PC-3 (cell line): ENCODE measurements at regions of chr2 and their contacts with region 1.

Region 1: DNA sequence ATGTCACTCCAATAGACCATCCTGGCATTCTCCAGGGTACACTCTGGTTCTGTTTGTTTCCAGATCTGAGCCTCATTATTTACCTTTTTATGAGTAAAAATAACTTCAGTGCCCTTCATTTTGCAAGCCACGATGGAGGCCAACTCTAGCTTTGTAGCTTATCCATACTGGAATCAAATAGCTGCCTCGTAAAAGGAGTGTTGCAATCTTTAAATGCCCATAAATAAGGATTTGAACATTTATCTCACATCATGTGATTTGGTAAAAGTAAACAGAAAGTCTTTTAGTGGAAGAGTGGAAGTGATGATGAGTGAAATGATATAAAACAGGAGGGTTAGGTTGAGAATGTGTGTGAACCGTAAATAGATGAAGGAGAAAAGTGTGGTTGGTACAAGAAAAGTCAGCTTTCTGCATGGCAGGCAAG is 349.0 kb downstream of the OSR1 start:
- DNase-seq: peak; percentile 92
- ATAC-seq: peak; percentile 89
- H3K4me3 ChIP-seq: no peak overlapping the region
- H3K27ac ChIP-seq: peak overlapping the region; percentile 57
- H3K4me1 ChIP-seq: peaks cover 17% of the 10 kb centered on the region
- H3K27me3 ChIP-seq: no peaks in the 10 kb centered on the region
- CTCF ChIP-seq: no peak

Region 2: DNA sequence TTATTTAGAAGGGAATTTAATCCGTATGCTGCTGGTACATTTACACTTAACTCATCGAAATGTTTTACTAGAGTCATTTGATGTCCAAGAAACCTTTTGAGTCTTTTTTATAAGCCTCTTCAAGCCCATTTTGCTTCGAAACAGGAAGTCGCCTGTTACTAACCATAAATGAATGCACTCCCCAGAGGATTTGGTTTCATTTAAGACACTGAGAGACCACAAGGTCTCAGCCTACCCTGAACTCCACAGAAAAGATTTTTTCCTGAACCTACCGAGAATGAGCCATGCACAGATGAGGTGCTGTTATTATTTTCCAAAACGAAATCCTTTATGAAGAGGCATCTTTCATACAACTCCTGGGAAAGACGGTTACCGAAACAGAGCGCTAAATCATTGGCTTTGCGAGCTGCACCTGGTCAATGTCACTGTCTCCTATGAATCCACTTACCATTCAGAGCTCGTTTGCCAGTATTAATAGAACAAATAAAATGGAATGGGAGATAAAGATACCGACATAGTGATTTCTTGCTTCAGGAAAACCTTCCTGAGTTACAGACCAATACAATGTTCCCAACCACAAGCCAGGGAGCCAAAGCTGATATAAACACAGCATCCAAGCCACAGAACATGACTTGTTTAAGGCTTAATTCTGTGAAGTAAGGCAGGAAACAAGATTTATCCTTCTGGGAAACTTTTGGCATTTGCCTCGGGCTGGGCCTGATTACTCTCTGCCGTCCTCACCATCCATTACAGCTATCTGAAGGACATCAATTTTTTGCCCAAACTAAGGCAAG is 33.1 kb before region 1 on chr2:
- CTCF ChIA-PET with region 1: no interaction called
- POLR2A ChIA-PET with region 1: no interaction called
- intact Hi-C with region 1: loop called (anchors 1 kb)
- DNase-seq: peak; percentile 89
- ATAC-seq: peak; percentile 81
- H3K4me3 ChIP-seq: peak overlapping the region; percentile 14
- H3K27ac ChIP-seq: peak overlapping the region; percentile 64
- H3K4me1 ChIP-seq: peaks cover 30% of the 10 kb centered on the region
- H3K27me3 ChIP-seq: no peaks in the 10 kb centered on the region
- CTCF ChIP-seq: no peak

Region 3: GRCh38 chr2:19059064-19059463 is 49.6 kb after region 1 on chr2:
- CTCF ChIA-PET with region 1: no interaction called
- POLR2A ChIA-PET with region 1: no interaction called
- intact Hi-C with region 1: no loop called
- DNase-seq: peak; percentile 90
- ATAC-seq: peak; percentile 82
- H3K4me3 ChIP-seq: peak overlapping the region; percentile 19; the same call in 1 of the 2 replicates
- H3K27ac ChIP-seq: no peak overlapping the region
- H3K4me1 ChIP-seq: peaks cover 16% of the 10 kb centered on the region
- H3K27me3 ChIP-seq: no peaks in the 10 kb centered on the region
- CTCF ChIP-seq: no peak

Region 4: DNA sequence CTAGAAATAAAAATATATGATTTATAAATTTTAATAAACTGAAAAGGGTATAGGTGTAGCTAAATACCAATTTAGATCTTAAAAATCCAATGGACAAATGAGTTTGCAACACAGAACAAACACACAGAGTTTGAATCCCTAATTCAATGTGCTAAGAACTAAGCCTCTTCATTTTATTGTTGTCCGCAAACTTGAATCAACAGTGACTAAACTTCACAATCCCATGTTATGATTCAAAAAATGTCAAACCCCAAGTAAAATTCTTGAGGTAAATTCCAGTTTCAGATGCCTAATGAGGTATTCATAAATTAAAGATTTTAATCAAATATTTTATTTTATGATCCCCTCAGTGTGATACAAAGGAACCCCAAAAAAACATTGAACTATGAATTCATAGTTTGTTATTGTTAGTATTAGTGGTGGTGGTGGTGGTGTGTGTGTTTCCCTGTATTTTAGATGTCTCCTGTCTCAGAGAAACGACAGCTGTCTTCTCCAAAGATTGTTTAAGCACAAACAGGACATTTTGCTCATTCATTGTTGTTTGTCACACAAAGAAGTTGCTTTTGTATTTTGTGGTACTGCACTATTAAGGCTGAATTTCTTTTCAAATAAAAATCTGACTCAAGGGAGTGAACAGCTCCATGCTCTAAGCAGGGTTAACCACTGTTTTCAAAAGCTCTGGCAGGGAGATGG is 89.1 kb after region 1 on chr2:
- CTCF ChIA-PET with region 1: no interaction called
- POLR2A ChIA-PET with region 1: no interaction called
- intact Hi-C with region 1: loop called (anchors 1 kb)
- DNase-seq: peak; percentile 78
- ATAC-seq: peak; percentile 59
- H3K4me3 ChIP-seq: no peak overlapping the region
- H3K27ac ChIP-seq: peak overlapping the region; percentile 28
- H3K4me1 ChIP-seq: peaks cover 56% of the 10 kb centered on the region
- H3K27me3 ChIP-seq: no peaks in the 10 kb centered on the region
- CTCF ChIP-seq: no peak

Region 5: DNA sequence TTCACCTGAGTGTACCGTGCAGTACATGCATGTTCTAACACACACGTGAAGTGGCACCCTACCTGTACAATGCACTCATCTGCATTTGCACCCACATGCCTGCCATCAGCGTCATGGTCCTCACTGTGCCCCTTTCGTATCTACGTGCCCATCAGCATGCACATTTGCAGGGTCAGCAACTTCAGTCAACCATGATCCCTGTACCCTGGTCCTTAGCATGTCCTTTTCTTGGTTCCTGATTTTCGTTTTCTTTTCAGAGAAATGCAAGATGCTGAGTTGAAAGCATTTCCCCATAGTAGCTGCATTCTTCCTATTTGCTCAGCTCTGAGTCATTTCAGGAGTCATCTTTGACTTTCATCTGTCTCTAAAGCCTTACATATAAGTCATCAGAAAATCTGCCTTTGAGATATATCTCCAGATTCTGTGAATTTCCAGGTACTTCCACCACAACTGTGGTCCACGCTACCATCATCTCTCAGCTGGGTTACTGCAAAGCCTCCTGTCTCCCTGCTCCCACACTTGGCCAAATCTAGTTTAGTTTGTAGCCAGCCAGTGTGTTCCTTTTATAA is 1355.9 kb after region 1 on chr2:
- CTCF ChIA-PET with region 1: no interaction called
- POLR2A ChIA-PET with region 1: no interaction called
- intact Hi-C with region 1: no loop called
- DNase-seq: peak; percentile 86
- ATAC-seq: peak; percentile 97
- H3K4me3 ChIP-seq: no peak overlapping the region
- H3K27ac ChIP-seq: peak overlapping the region; percentile 32
- H3K4me1 ChIP-seq: peaks cover 22% of the 10 kb centered on the region
- H3K27me3 ChIP-seq: no peaks in the 10 kb centered on the region
- CTCF ChIP-seq: no peak